Ovary (tissue), 10 donors: ENCODE measurements at regions of chr9 and their contacts with region 1.

Region 1: DNA sequence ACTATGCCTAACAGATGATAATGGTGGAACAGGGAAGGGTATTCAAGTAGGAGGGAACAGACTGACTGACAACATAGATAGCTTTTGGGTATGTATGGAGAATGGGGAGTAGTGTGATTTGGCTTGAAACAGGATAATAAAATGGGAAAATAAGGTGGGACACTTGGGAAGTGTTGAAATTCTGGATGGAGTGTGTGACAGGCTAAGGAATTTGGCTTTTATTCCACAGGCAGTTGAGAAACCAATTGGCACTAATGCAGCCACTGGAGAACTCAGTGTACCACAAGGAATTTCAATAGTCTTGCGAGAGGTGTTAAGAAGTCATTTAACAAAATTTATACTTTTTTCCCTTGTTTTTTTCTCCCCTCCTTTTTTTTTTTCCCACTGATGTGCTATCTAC is 153.5 kb upstream of the ELAVL2 start:
- DNase-seq: no peak
- H3K4me3 ChIP-seq: no peak overlapping the region
- H3K27ac ChIP-seq: no peak overlapping the region
- H3K4me1 ChIP-seq: no peaks in the 10 kb centered on the region
- H3K27me3 ChIP-seq: no peaks in the 10 kb centered on the region
- CTCF ChIP-seq: no peak
- EP300 ChIP-seq: no peak
- POLR2A ChIP-seq: no peak

Region 2: GRCh38 chr9:23073136-23073535 is 906.4 kb before region 1 on chr9:
- intact Hi-C with region 1: loop called in 1 of 4 experiments (anchors 10 kb)
- DNase-seq: no peak
- H3K4me3 ChIP-seq: no peak overlapping the region
- H3K27ac ChIP-seq: no peak overlapping the region
- H3K4me1 ChIP-seq: no peaks in the 10 kb centered on the region
- H3K27me3 ChIP-seq: no peaks in the 10 kb centered on the region
- CTCF ChIP-seq: no peak
- EP300 ChIP-seq: no peak
- POLR2A ChIP-seq: no peak

Region 3: GRCh38 chr9:24090566-24090965 is 111.1 kb after region 1 on chr9:
- intact Hi-C with region 1: no loop called
- DNase-seq: no peak
- H3K4me3 ChIP-seq: no peak overlapping the region
- H3K27ac ChIP-seq: no peak overlapping the region
- H3K4me1 ChIP-seq: no peaks in the 10 kb centered on the region
- H3K27me3 ChIP-seq: no peaks in the 10 kb centered on the region
- CTCF ChIP-seq: no peak
- EP300 ChIP-seq: no peak
- POLR2A ChIP-seq: no peak